Stomach (tissue), 19 donors: ENCODE measurements at regions of chr4 and their contacts with region 1.

Region 1: GRCh38 chr4:4334798-4335520 is 44.9 kb downstream of the ZBTB49 start:
- DNase-seq: peak; percentile 81 to 83
- H3K4me3 ChIP-seq: no peak overlapping the region
- H3K27ac ChIP-seq: no peak overlapping the region
- H3K4me1 ChIP-seq: peaks cover 0 to 5% (median 0%) of the 10 kb centered on the region in 4 donors
- H3K27me3 ChIP-seq: peaks cover 0 to 5% (median 0%) of the 10 kb centered on the region in 3 donors
- CTCF ChIP-seq: peak in 5 of 7 experiments; percentile 40 to 80 (median 46)
- EP300 ChIP-seq: no peak
- POLR2A ChIP-seq: no peak

Region 2: GRCh38 chr4:4256799-4257198 is 78.2 kb before region 1 on chr4:
- intact Hi-C with region 1: loop called (anchors 5 kb)
- DNase-seq: no peak
- H3K4me3 ChIP-seq: no peak overlapping the region
- H3K27ac ChIP-seq: no peak overlapping the region
- H3K4me1 ChIP-seq: peaks cover 0 to 22% (median 10%) of the 10 kb centered on the region in 4 donors
- H3K27me3 ChIP-seq: no peaks in the 10 kb centered on the region
- CTCF ChIP-seq: no peak
- EP300 ChIP-seq: no peak
- POLR2A ChIP-seq: no peak

Region 3: GRCh38 chr4:4269856-4270255 is 65.1 kb before region 1 on chr4:
- intact Hi-C with region 1: no loop called
- DNase-seq: no peak
- H3K4me3 ChIP-seq: no peak overlapping the region
- H3K27ac ChIP-seq: peak overlapping the region in 4 of 5 donors; percentile 31 to 64 (median 46)
- H3K4me1 ChIP-seq: no peaks in the 10 kb centered on the region
- H3K27me3 ChIP-seq: no peaks in the 10 kb centered on the region
- CTCF ChIP-seq: no peak
- EP300 ChIP-seq: no peak
- POLR2A ChIP-seq: no peak

Region 4: GRCh38 chr4:4888695-4889094 is 553.7 kb after region 1 on chr4:
- intact Hi-C with region 1: no loop called
- DNase-seq: no peak
- H3K4me3 ChIP-seq: no peak overlapping the region
- H3K27ac ChIP-seq: no peak overlapping the region
- H3K4me1 ChIP-seq: no peaks in the 10 kb centered on the region
- H3K27me3 ChIP-seq: peaks cover 0 to 27% (median 8%) of the 10 kb centered on the region in 3 donors
- CTCF ChIP-seq: no peak
- EP300 ChIP-seq: no peak
- POLR2A ChIP-seq: no peak

Region 5: GRCh38 chr4:5003372-5003857 is 668.5 kb after region 1 on chr4:
- intact Hi-C with region 1: no loop called
- DNase-seq: peak in 1 of 2 donors; percentile 9
- H3K4me3 ChIP-seq: no peak overlapping the region
- H3K27ac ChIP-seq: no peak overlapping the region
- H3K4me1 ChIP-seq: no peaks in the 10 kb centered on the region
- H3K27me3 ChIP-seq: peaks cover 0 to 34% (median 4%) of the 10 kb centered on the region in 3 donors
- CTCF ChIP-seq: no peak
- EP300 ChIP-seq: no peak
- POLR2A ChIP-seq: no peak